ENCODE measurements at regions of chr7 and their contacts with region 1.

Region 1: GRCh38 chr7:4681886-4682620 is at the start of gene FOXK1:
- DNase-seq: peak; percentile 78
- ATAC-seq: peak; percentile 87
- H3K4me3 Mint-ChIP-seq: peak within 1 kb of the TSS; percentile 89
- H3K27ac Mint-ChIP-seq: peak within 1 kb of the TSS; percentile 97
- H3K4me1 Mint-ChIP-seq: peaks cover 25% of the 10 kb centered on the region
- H3K27me3 Mint-ChIP-seq: no peaks in the 10 kb centered on the region
- CTCF ChIP-seq: no peak
- total RNA-seq, gene FOXK1: 38.5 to 39.6 TPM

Region 2: DNA sequence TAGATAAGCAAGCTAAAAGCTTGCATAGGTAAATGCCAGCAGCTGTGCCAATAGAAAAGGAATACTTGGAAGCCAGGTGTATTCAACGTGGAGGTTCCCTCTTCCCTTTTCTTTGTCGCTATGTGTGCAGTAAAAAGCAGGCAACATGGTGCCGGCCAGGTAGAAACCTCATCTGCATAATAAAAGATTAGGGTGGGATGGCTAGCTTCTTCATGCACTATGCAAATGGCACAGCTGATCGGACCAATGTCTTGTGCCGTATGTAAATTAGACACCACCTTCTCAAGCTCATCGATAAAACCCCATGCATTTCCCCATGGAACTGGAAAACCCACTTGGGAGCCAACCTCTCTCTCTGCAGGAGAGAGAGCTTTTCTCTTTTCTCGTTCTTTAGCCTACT is 150.8 kb before region 1 on chr7:
- CTCF ChIA-PET with region 1: no interaction called
- POLR2A ChIA-PET with region 1: no interaction called
- intact Hi-C with region 1: no loop called
- DNase-seq: no peak
- ATAC-seq: no peak
- H3K4me3 Mint-ChIP-seq: no peak overlapping the region
- H3K27ac Mint-ChIP-seq: no peak overlapping the region
- H3K4me1 Mint-ChIP-seq: no peaks in the 10 kb centered on the region
- H3K27me3 Mint-ChIP-seq: no peaks in the 10 kb centered on the region
- CTCF ChIP-seq: no peak

Region 3: DNA sequence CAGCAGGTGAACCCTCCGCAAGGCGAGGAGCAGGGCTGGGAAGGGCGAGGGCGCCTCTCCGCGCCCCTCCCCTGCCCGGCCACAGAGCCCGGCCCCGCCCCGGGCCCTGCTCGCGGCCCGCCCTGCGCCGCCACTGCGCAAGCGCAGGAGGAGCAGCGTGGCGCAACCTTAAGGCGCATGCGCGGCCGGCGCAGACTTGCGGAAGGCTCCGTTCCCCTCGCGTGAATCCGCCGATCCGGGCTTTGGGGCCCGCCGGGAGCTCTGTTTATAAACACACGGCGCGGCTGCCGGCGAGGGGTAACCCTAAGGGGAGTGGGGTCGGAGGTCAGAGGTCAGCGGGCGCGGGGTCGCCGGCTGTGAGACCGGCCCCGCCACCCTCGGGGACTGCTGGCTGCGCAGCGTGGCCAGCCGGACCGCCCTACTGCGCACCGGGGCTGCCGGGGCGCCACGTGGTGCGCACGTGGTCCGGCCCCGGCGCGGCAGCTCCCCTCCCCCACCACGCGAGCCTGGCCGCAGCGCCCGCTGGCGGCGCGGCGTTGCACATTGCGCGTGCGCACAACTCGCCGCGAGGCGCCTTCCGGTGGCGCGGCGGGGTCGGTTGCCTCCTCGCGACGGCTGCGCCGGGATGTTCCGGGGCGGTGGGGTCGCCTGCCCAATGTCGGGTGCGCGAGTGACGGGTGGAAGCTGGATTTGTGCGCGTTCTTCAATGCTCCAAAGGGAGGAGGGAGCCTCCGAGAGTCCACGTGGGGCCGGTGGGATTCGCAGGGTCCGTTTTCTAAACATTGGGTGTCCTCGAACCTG is 40.2 kb before region 1 on chr7:
- CTCF ChIA-PET with region 1: interaction called, 15 read pairs
- POLR2A ChIA-PET with region 1: interaction called, 62 read pairs
- intact Hi-C with region 1: loop called (anchors 2 kb)
- DNase-seq: peak; percentile 97
- ATAC-seq: peak; percentile 91
- H3K4me3 Mint-ChIP-seq: peak overlapping the region; percentile 90
- H3K27ac Mint-ChIP-seq: peak overlapping the region; percentile 92
- H3K4me1 Mint-ChIP-seq: peaks cover 5% of the 10 kb centered on the region
- H3K27me3 Mint-ChIP-seq: no peaks in the 10 kb centered on the region
- CTCF ChIP-seq: no peak

Region 4: DNA sequence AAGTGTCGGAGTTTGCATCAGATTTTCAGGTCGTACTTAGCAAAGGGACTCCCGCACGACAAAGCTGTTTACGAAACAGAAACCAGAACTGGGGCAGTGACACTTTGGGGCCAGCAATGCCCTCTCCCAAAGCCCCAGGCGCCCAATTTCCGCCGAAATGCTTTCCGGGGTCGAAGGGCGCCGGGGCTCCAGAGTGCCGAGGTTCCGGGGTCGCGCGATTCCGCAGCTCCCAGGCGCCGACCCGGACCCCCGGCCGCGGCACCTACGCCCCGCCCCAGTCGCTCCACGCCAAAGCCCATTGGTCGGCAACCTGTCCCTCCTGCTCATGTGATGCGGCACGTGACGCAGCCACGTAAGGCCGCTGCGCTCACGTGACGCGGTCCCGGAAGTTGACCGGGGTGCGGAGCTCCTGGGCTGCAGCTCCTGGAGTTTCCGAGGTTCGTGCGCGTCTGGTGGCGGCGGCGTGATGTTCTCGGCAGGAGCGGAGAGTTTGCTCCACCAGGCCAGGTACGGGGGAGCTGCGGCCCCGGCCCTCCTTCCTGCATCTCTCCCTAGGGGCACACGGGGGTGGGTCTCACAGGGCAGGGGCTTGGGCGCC is 93.3 kb after region 1 on chr7 and contains the start of gene AP5Z1:
- CTCF ChIA-PET with region 1: no interaction called
- POLR2A ChIA-PET with region 1: interaction called, 16 read pairs
- intact Hi-C with region 1: no loop called
- DNase-seq: peak; percentile 97
- ATAC-seq: peak; percentile 96
- H3K4me3 Mint-ChIP-seq: peak within 1 kb of the TSS; percentile 99
- H3K27ac Mint-ChIP-seq: peak within 1 kb of the TSS; percentile 98
- H3K4me1 Mint-ChIP-seq: peaks cover 36% of the 10 kb centered on the region
- H3K27me3 Mint-ChIP-seq: no peaks in the 10 kb centered on the region
- CTCF ChIP-seq: no peak
- total RNA-seq, gene AP5Z1: 21.2 to 21.3 TPM